Caco-2 (cell line): ENCODE measurements at regions of chr2 and their contacts with region 1.

Region 1: DNA sequence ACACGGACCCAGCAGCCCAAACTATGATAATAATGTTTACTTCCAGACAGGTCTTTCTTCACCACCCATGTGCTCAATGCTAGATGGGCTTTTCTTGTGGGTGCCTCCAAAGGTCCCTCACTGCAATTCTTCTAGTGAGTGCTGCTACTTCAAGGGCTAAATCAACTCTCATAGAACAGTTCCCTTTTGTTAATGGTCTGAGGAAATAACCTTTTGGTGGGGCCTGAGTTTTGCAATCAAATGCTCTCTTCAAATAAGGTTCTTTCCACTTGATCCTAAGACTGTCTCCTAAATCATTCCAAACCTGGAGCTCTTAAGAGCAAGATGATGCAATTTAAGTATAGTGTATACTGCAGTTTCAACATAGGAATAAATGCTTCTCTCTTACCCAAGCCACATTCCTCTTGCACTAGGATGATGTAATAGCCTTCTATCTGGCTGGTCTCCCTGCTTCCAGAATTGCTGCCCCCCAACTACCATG is 6.0 kb downstream of the NEMP2 start:
- DNase-seq: peak; percentile 78
- H3K4me3 ChIP-seq: no peak overlapping the region
- H3K4me3 Mint-ChIP-seq: peak overlapping the region; percentile 59
- H3K27ac Mint-ChIP-seq: peak overlapping the region; percentile 93
- H3K4me1 ChIP-seq: peaks cover 75% of the 10 kb centered on the region
- H3K4me1 Mint-ChIP-seq: peaks cover 47% of the 10 kb centered on the region
- H3K27me3 ChIP-seq: no peaks in the 10 kb centered on the region
- H3K27me3 Mint-ChIP-seq: no peaks in the 10 kb centered on the region
- CTCF ChIP-seq: no peak

Region 2: DNA sequence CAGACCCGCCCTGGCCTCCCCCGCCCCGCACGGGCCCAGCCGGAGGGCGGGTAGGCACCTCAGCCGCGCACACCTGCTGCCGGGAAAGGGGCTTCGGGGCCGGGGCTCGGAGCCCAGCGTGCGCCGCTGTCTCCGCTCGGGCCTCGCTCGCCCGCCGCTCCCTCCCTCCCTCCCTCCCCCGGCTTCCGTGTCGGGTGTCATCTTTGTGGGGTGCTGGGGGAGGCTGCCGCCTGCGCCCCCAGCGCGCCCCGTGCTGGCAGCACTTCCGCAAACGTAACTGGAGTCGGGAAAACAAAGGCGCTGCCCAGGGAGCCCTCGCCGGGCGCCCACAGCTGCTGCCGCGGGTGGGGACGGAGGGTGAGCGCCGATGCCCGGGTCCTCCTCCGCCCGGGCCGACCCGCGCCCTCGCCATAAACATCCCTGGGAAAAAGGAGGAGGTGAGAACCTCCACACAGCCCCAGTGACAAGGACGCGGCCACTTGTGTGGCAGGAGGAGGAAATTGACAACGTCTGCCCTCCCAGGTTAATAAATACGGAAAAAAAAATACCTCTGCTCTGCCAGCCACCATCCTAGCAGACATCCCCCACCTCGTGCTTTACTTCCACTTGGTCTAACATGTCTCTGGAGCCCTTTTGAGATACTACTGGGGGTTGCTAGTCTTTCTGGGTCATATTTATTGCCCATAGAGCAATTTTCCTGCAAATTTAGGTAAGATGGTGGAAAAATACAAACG is 119.9 kb before region 1 on chr2:
- CTCF ChIA-PET with region 1: no interaction called
- POLR2A ChIA-PET with region 1: no interaction called
- intact Hi-C with region 1: loop called (anchors 1 kb)
- DNase-seq: peak in 1 of 2 experiments; percentile 51
- H3K4me3 ChIP-seq: peak overlapping the region; percentile 70
- H3K4me3 Mint-ChIP-seq: peak overlapping the region; percentile 66
- H3K27ac Mint-ChIP-seq: no peak overlapping the region
- H3K4me1 ChIP-seq: peaks cover 15% of the 10 kb centered on the region
- H3K4me1 Mint-ChIP-seq: no peaks in the 10 kb centered on the region
- H3K27me3 ChIP-seq: no peaks in the 10 kb centered on the region
- H3K27me3 Mint-ChIP-seq: no peaks in the 10 kb centered on the region
- CTCF ChIP-seq: no peak

Region 3: GRCh38 chr2:190497428-190497827 is 31.1 kb before region 1 on chr2:
- CTCF ChIA-PET with region 1: no interaction called
- POLR2A ChIA-PET with region 1: no interaction called
- intact Hi-C with region 1: loop called (anchors 1 kb)
- DNase-seq: peak; percentile 53 to 61
- H3K4me3 ChIP-seq: no peak overlapping the region
- H3K4me3 Mint-ChIP-seq: no peak overlapping the region
- H3K27ac Mint-ChIP-seq: no peak overlapping the region
- H3K4me1 ChIP-seq: peaks cover 6% of the 10 kb centered on the region
- H3K4me1 Mint-ChIP-seq: peaks cover 8% of the 10 kb centered on the region
- H3K27me3 ChIP-seq: no peaks in the 10 kb centered on the region
- H3K27me3 Mint-ChIP-seq: no peaks in the 10 kb centered on the region
- CTCF ChIP-seq: no peak

Region 4: DNA sequence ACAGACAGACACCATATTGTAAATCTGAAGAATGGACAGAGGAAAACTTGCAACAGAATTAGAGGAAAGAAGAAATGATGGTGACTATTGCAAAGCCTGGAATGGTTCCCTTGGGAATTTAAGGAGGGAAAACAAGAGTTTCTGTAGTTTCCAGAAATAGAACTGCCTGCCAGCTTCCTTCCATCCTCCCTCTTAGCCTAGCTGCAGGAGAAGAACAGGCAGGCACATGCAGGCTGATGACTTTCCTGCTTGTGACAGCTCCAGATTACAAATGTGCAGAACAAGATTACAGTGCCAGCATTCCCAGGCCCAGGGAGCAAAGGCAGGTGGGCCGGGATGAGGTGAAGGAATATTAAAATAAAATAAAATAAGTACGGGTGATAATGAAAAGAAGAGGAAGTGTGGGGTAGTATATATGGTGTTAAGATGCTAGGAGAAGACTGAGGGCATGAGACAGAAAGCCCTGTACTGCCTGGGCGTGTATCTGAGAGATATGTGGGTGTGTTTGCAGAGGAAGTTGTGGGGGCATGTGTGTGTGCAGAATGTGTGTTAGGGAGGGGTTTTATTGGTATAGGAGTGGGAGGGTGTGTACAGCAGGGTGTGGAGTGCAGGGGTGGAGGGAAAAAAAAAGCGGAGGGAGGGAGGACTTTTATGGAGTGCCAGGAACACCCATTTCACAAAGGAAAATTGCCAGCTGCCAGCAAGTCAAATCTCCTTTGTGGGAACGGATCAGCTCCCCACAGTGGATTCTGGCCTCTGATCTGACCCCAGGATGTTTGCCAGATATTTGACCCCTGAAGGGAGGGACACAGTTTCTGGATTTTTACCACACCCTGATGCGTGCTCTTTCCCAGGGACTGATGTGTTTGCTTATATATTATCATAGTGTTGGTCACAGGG is 49.8 kb after region 1 on chr2:
- CTCF ChIA-PET with region 1: no interaction called
- POLR2A ChIA-PET with region 1: no interaction called
- intact Hi-C with region 1: loop called (anchors 1 kb)
- DNase-seq: peak; percentile 74 to 91
- H3K4me3 ChIP-seq: no peak overlapping the region
- H3K4me3 Mint-ChIP-seq: peak overlapping the region; percentile 56
- H3K27ac Mint-ChIP-seq: peak overlapping the region; percentile 65
- H3K4me1 ChIP-seq: peaks cover 36% of the 10 kb centered on the region
- H3K4me1 Mint-ChIP-seq: peaks cover 33% of the 10 kb centered on the region
- H3K27me3 ChIP-seq: no peaks in the 10 kb centered on the region
- H3K27me3 Mint-ChIP-seq: no peaks in the 10 kb centered on the region
- CTCF ChIP-seq: no peak

Region 5: GRCh38 chr2:191321861-191322686 is 793.5 kb after region 1 on chr2:
- CTCF ChIA-PET with region 1: no interaction called
- POLR2A ChIA-PET with region 1: no interaction called
- intact Hi-C with region 1: no loop called
- DNase-seq: no peak
- H3K4me3 ChIP-seq: no peak overlapping the region
- H3K4me3 Mint-ChIP-seq: no peak overlapping the region
- H3K27ac Mint-ChIP-seq: peak overlapping the region; percentile 88
- H3K4me1 ChIP-seq: peaks cover 45% of the 10 kb centered on the region
- H3K4me1 Mint-ChIP-seq: peaks cover 38% of the 10 kb centered on the region
- H3K27me3 ChIP-seq: no peaks in the 10 kb centered on the region
- H3K27me3 Mint-ChIP-seq: no peaks in the 10 kb centered on the region
- CTCF ChIP-seq: no peak